ENCODE measurements at regions of chr22 and their contacts with region 1.

Region 1: DNA sequence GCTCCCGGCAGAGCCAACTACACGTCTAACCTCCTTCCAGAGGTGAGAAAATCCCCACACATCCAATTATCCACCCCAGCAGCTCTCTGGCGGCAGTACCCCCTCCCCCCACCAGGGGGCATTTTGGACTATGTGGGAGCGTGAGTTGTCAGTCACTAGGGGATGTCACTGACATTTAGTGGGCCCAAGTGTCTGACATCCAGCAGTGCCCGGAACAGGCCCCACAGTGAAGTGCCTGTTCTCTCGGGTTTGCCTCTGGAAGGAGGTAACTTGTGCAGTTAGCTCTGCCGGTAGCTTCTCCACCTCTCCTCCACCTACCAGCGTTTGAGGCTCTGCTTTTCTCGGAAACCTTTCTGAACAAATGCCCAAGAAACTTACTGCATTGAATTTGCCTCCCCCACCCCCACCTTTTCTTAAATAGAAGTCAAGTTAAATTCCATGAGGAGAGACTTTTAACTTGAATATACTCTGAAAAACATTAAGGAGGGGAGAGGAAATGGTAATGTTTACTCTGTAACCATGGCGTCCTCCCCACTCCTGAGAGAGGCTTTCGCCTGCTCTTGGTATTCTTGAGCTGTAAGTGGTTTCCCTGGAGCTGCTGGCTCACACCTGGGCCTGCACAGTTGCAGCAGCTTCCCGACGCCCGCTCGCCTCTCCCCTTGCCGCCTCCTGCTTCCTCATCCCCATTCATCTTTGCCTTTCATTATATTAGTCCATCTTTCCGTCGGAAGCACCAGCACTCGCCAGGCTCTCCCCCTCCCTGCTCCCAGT is 112.8 kb downstream of the WNT7B start:
- DNase-seq: peak; percentile 79
- ATAC-seq: peak; percentile 65
- H3K4me3 Mint-ChIP-seq: no peak overlapping the region
- H3K27ac Mint-ChIP-seq: no peak overlapping the region
- H3K4me1 Mint-ChIP-seq: peaks cover 2% of the 10 kb centered on the region
- H3K27me3 Mint-ChIP-seq: peaks cover 49% of the 10 kb centered on the region

Region 2: DNA sequence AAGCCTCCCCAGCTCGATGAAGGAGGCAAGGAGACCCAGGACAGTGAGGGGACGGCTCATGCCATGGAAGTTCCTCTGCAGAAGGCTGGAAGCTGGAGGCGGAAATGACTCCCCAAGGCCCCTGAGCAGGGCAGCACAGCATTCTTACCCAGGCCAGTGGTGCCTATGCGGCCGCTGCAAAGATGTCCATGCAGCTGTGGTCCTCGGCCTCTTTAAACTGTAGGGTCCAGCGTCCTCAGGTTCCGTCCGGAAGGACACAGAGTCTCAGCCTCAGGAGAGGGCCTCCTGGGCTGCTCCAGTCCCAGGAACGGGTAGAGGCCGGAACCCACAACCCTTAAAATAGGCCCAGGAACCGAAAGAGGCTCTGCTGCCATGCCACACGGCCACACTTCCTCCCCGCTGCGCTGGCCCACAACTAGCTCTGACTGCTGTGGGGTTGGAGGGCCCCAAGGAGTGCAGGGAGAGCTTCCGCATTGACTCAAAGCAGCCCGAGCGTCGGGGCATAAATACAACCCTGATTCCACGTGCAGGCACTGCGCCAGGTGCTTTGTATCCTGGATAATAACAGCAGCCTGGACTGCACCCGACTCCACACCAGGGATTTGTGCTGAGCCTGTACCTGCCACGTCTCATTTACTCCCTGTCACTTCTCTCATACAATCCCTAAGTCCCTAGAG is 628.9 kb before region 1 on chr22:
- CTCF ChIA-PET with region 1: no interaction called
- DNase-seq: peak; percentile 81
- ATAC-seq: peak; percentile 87
- H3K4me3 Mint-ChIP-seq: no peak overlapping the region
- H3K27ac Mint-ChIP-seq: peak overlapping the region; percentile 70
- H3K4me1 Mint-ChIP-seq: peaks cover 32% of the 10 kb centered on the region
- H3K27me3 Mint-ChIP-seq: no peaks in the 10 kb centered on the region

Region 3: DNA sequence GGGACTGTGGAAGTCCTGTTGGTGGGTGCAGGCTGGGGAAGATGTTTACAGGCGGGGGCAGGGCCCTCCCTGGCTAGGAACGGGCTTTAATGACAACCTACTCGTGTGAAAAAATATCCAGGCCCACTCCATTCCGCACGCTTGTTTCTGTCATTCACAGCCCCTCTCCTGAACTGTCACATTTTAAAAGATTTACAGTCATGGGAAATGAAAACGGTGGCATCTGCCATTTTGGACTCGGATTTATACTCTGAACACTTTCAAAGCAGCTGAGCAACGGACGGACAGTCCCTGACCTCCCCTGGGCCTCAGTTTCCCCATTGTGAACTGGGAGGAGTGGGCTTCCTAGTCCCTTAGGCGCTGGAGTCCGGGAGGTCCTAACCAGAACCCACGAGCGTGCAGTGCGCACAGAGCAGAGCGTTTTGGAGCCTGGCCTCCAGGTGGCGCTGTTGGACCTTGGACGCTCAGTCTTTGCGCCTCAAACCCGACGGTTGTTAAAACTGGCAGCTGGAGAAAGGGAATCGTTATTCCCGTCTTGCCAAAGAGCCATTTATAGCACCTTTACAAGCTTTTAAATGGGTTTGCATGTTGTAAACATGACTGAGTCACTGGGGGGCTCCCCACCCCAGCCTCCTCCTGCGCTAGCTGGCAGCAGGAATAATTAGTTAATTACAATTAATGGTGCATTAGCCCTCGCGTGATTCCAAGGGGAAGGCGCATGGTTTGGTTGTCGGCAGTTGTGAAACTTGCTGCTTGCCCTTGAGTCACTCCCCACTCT is 286.2 kb before region 1 on chr22:
- CTCF ChIA-PET with region 1: interaction called, 15 read pairs
- DNase-seq: peak; percentile 84
- ATAC-seq: peak; percentile 83
- H3K4me3 Mint-ChIP-seq: no peak overlapping the region
- H3K27ac Mint-ChIP-seq: no peak overlapping the region
- H3K4me1 Mint-ChIP-seq: peaks cover 11% of the 10 kb centered on the region
- H3K27me3 Mint-ChIP-seq: no peaks in the 10 kb centered on the region

Region 4: DNA sequence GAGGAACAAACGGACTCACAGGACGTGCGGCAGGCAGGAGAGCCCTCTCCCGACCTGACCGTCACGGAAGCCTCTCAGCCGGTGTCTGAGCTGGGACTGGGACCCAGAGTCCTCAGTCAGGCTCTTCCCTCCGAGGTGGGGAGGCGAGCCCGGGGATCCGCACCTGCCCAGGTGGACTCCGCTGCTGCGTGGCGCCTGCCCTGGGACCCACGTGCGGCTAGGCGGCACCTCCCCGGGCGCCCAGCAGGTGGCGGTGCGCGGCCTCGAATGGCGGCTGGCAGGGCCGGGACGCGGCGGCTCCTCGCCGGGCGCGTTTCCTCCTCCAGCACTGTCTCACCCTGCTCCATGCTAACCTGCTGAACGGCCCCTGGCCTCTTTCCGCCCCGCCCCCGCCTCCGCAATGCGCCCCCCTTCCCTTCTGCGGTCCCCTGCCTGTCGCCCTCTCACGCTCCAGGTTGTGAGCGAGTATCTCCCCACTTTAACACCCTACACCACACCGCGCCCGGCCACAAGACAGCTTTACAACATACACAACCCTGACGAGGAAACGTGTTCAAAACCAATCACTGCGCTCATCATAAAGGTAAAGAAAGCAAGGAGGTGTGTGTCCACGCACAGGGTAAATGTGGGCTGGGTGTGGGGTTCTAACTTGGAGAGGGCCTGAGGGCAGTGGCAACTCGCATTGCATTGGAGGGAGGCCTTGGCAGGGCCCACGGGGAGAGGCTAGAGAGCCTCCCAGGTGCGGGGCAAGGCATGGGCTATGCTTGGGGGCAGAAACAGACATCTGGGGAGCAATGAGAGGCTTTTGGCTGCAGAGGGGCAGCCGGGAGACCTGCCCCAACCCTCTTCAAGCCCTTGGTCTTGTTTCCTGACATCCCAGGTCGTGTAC is 218.4 kb before region 1 on chr22:
- CTCF ChIA-PET with region 1: interaction called, 18 read pairs
- DNase-seq: peak; percentile 81
- ATAC-seq: peak; percentile 94
- H3K4me3 Mint-ChIP-seq: peak overlapping the region; percentile 18
- H3K27ac Mint-ChIP-seq: peak overlapping the region; percentile 4
- H3K4me1 Mint-ChIP-seq: peaks cover 45% of the 10 kb centered on the region
- H3K27me3 Mint-ChIP-seq: peaks cover 41% of the 10 kb centered on the region

Region 5: DNA sequence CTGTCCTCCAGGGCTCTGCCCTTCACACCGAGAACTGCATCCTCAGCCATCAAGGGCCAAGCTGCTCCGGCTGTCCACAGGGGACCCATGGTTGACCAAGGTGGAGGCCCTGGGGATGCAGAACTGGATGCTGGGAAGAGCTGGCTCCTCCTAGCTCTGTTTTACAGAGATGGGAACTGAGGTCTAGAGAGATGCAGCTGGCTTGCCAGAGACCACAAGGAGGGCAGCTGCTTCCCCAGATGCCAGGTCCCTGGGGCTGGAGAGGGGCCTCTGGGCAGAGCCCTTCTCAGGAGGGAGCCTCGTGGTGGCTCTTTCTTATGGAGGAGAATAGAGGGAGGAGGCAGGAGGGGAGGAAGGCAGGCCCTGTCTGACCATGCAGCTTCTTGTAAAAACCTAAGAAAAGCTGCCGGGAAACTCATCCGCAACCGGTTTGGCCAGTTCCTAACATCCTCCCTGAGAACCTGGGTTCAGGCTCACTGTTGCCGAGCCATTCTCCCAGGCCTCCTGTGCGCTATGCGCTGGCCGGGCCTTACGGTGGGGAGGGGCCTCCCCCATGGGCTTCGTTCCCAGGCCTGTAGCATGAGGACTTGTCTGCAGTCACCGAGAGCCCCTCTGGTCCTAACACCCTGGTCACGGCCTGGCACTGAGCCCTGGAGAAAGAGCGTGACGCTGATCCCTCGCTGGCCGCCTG is 32.2 kb after region 1 on chr22:
- CTCF ChIA-PET with region 1: interaction called, 11 read pairs
- DNase-seq: no peak
- ATAC-seq: no peak
- H3K4me3 Mint-ChIP-seq: no peak overlapping the region
- H3K27ac Mint-ChIP-seq: no peak overlapping the region
- H3K4me1 Mint-ChIP-seq: no peaks in the 10 kb centered on the region
- H3K27me3 Mint-ChIP-seq: peaks cover 9% of the 10 kb centered on the region

Measured in activated CD8-positive, alpha-beta memory T cell treated with anti-CD3 and anti-CD28 coated beads, Interleukin-2, amount 10 ng/mL, durations not matched to agents 7 days and 5 days (primary cell).